ENCODE measurements at regions of chr6 and their contacts with region 1.

Region 1: DNA sequence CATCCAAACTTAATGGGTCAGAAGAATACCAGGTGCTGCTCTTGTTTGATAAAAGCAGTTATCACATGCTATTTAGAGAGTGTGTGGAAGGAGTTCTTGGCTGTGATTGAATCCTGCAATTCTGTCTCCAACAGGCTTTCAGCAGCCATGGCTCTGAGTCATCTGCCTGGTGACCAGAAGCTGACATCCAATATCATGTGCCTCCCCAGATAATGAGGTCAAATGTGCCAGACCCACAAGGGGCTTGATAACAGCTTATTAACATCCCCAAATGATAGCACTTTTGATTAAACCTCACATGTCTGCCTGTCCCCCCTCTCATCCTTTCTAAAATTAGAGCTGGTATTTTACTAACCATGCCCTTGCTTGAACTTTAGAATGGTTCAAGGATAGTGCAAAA is 175.7 kb upstream of the PLN start:
- DNase-seq: peak in 4 of 5 donors; percentile 68 to 85 (median 80)
- ATAC-seq: peak; percentile 89 to 95 (median 92)
- H3K4me3 ChIP-seq: no peak overlapping the region
- H3K27ac ChIP-seq: peak overlapping the region; percentile 51 to 93 (median 86)
- H3K4me1 ChIP-seq: peaks cover 0 to 22% (median 6%) of the 10 kb centered on the region in 12 donors
- H3K27me3 ChIP-seq: no peaks in the 10 kb centered on the region
- CTCF ChIP-seq: no peak
- POLR2A ChIP-seq: no peak

Region 2: DNA sequence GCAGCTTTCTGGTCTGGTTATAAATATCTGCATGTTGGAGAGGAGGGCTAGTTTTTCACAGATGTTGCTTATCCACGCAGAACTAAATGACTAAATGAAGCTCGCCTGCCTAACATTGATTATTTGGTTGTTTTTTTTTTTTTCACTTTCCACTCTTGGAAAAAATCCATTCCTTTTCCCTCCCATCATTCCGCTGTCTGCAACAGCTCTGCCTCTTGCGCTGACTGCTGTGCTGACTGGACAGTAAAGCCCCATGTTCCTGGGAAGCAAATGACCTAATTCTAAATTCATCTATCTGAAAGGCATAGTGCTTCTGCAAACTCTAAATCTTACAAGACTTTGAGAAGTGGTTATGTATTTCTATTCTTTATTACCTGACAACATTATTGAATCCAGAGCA is 79.9 kb before region 1 on chr6:
- intact Hi-C with region 1: loop called in 8 of 10 experiments (anchors 2 to 5 kb)
- DNase-seq: no peak
- ATAC-seq: no peak
- H3K4me3 ChIP-seq: no peak overlapping the region
- H3K27ac ChIP-seq: peak overlapping the region in 10 of 12 donors; percentile 22 to 95 (median 88)
- H3K4me1 ChIP-seq: peaks cover 0 to 50% (median 15%) of the 10 kb centered on the region in 12 donors
- H3K27me3 ChIP-seq: no peaks in the 10 kb centered on the region
- CTCF ChIP-seq: no peak
- POLR2A ChIP-seq: no peak

Region 3: GRCh38 chr6:118387764-118388701 is 15.6 kb after region 1 on chr6:
- intact Hi-C with region 1: no loop called
- DNase-seq: no peak
- ATAC-seq: no peak
- H3K4me3 ChIP-seq: no peak overlapping the region
- H3K27ac ChIP-seq: no peak overlapping the region
- H3K4me1 ChIP-seq: no peaks in the 10 kb centered on the region
- H3K27me3 ChIP-seq: no peaks in the 10 kb centered on the region
- CTCF ChIP-seq: no peak
- POLR2A ChIP-seq: no peak

Region 4: DNA sequence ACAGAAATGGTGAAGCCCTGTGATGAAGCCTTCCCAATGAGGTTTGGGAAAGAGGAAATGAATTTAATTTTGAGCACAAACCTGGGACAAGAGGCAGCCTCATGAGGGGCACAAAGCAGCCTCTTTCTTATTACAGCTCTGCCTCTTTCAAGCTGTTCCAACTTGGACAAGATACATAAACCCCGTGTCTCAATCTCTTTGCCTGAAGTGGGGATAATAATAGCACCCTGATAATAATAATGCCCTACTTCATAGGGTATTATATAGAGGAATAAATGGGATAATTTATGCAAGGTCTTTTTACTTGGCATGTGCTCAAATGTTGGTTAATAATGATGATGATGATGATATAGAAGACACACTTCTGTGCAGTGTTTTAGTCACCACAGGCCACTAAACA is 84.6 kb after region 1 on chr6:
- intact Hi-C with region 1: loop called in 2 of 10 experiments (anchors 5 kb)
- DNase-seq: no peak
- ATAC-seq: no peak
- H3K4me3 ChIP-seq: no peak overlapping the region
- H3K27ac ChIP-seq: peak overlapping the region in 3 of 12 donors; percentile 13 to 20 (median 18)
- H3K4me1 ChIP-seq: peaks cover 0 to 4% (median 0%) of the 10 kb centered on the region in 12 donors
- H3K27me3 ChIP-seq: no peaks in the 10 kb centered on the region
- CTCF ChIP-seq: no peak
- POLR2A ChIP-seq: no peak

Region 5: GRCh38 chr6:118509009-118509617 is 136.7 kb after region 1 on chr6:
- intact Hi-C with region 1: loop called in 7 of 10 experiments (anchors 2 to 10 kb)
- DNase-seq: peak in 4 of 5 donors; percentile 35 to 51 (median 44)
- ATAC-seq: peak in 1 of 4 donors; percentile 43
- H3K4me3 ChIP-seq: no peak overlapping the region
- H3K27ac ChIP-seq: peak overlapping the region in 11 of 12 donors; percentile 21 to 87 (median 79)
- H3K4me1 ChIP-seq: peaks cover 0 to 25% (median 8%) of the 10 kb centered on the region in 12 donors
- H3K27me3 ChIP-seq: no peaks in the 10 kb centered on the region
- CTCF ChIP-seq: peak; percentile 53 to 81 (median 70)
- POLR2A ChIP-seq: no peak

Region 6: GRCh38 chr6:118551063-118552053 is 178.9 kb after region 1 on chr6:
- intact Hi-C with region 1: loop called in 2 of 10 experiments (anchors 5 kb)
- DNase-seq: no peak
- ATAC-seq: peak; percentile 41 to 64 (median 64)
- H3K4me3 ChIP-seq: peak overlapping the region; percentile 27 to 64 (median 54)
- H3K27ac ChIP-seq: peak overlapping the region; percentile 27 to 87 (median 78)
- H3K4me1 ChIP-seq: peaks cover 0 to 14% (median 0%) of the 10 kb centered on the region in 12 donors
- H3K27me3 ChIP-seq: no peaks in the 10 kb centered on the region
- CTCF ChIP-seq: peak; percentile 31 to 77 (median 58)
- POLR2A ChIP-seq: no peak